CD14-positive monocyte (primary cell): ENCODE measurements at regions of chr1 and their contacts with region 1.

Region 1: DNA sequence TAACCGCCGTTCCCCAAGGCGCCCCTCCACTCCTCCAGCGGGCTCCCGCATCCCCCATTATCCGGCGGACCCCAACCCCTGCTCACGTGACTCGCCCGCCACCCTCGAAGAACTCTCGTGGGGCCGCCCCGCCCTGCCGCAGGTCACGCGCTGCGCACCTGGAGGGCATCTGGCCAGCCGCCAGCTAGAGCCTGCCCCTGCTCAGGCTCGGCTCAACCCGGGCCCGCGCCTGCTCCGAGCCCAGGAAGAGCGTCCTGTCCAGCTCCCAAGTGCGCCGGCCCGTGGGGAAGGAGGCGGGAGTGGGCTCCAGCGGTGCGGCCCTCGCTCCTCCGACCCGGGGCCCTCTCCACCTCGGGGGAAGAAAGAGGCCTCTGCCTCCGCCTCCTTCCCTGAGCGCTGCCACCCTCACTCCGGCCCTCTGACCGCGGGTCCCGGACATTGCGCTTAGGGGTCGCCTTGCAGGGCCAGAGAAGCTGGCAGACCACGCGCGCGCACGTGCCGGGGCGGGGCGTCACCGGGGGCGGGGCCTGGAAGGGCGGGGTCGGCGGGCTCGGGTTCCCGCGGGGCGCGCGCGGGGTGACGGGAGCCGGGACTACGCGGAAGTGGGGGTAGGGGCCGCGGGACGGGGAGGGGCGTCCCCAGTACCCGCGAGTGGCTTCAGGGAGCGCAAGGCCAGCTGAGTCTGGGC is 28.4 kb downstream of the HMGN2 start:
- DNase-seq: peak; percentile 73 to 77 (median 75)
- H3K4me3 ChIP-seq: peak overlapping the region; percentile 73 to 95 (median 86)
- H3K4me3 Mint-ChIP-seq: peak overlapping the region; percentile 85 to 91
- H3K27ac ChIP-seq: peak overlapping the region; percentile 69 to 91
- H3K27ac Mint-ChIP-seq: peak overlapping the region; percentile 87 to 97 (median 93)
- H3K4me1 ChIP-seq: peaks cover 17 to 22% of the 10 kb centered on the region in 2 donors
- H3K4me1 Mint-ChIP-seq: peaks cover 20% of the 10 kb centered on the region
- H3K27me3 ChIP-seq: no peaks in the 10 kb centered on the region
- H3K27me3 Mint-ChIP-seq: peaks cover 0 to 9% (median 0%) of the 10 kb centered on the region in 3 donors
- CTCF ChIP-seq: peak; percentile 63

Region 2: DNA sequence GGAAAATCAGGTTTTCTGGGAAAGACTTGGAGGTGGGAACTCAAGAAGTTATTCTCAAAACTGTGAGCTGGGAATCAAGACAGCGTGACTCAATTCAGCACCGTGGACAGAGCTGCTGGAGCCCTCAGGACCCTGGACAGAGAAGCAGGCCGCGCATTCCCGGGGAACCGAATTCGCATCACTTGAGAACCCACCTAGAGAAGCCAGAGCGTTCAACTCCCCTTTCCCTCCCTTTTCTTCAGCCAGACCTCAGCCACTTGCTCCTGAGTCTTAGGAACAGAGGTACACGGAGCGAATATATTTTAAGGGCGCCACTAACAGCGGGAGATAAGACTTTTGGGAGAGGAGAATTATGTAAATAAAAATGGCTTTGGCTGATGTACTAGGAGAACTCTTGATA is 92.0 kb before region 1 on chr1:
- intact Hi-C with region 1: no loop called
- DNase-seq: peak; percentile 45 to 48 (median 46)
- H3K4me3 ChIP-seq: no peak overlapping the region
- H3K4me3 Mint-ChIP-seq: peak overlapping the region in 1 of 2 donors; percentile 82
- H3K27ac ChIP-seq: no peak overlapping the region
- H3K27ac Mint-ChIP-seq: peak overlapping the region in 1 of 7 donors; percentile 46
- H3K4me1 ChIP-seq: peaks cover 8 to 12% of the 10 kb centered on the region in 2 donors
- H3K4me1 Mint-ChIP-seq: peaks cover 18% of the 10 kb centered on the region
- H3K27me3 ChIP-seq: peaks cover 44 to 60% of the 10 kb centered on the region in 2 donors
- H3K27me3 Mint-ChIP-seq: peaks cover 59 to 73% (median 68%) of the 10 kb centered on the region in 3 donors
- CTCF ChIP-seq: no peak

Region 3: GRCh38 chr1:26472901-26473845 is 27.5 kb before region 1 on chr1:
- intact Hi-C with region 1: loop called in 1 of 2 experiments (anchors 2 kb)
- DNase-seq: peak; percentile 93 to 95 (median 93)
- H3K4me3 ChIP-seq: peak overlapping the region; percentile 51 to 92 (median 81)
- H3K4me3 Mint-ChIP-seq: peak overlapping the region; percentile 93 to 96
- H3K27ac ChIP-seq: peak overlapping the region; percentile 86 to 90
- H3K27ac Mint-ChIP-seq: peak overlapping the region; percentile 78 to 93 (median 87)
- H3K4me1 ChIP-seq: peaks cover 37 to 47% of the 10 kb centered on the region in 2 donors
- H3K4me1 Mint-ChIP-seq: peaks cover 52% of the 10 kb centered on the region
- H3K27me3 ChIP-seq: no peaks in the 10 kb centered on the region
- H3K27me3 Mint-ChIP-seq: peaks cover 0 to 3% (median 0%) of the 10 kb centered on the region in 3 donors
- CTCF ChIP-seq: no peak

Region 4: GRCh38 chr1:26553942-26554682 is 53.5 kb after region 1 on chr1:
- intact Hi-C with region 1: loop called in 1 of 2 experiments (anchors 5 kb)
- DNase-seq: peak; percentile 61 to 69 (median 63)
- H3K4me3 ChIP-seq: peak overlapping the region in 1 of 3 experiments; percentile 0
- H3K4me3 Mint-ChIP-seq: no peak overlapping the region
- H3K27ac ChIP-seq: peak overlapping the region; percentile 54 to 85
- H3K27ac Mint-ChIP-seq: peak overlapping the region; percentile 63 to 93 (median 86)
- H3K4me1 ChIP-seq: peaks cover 22 to 31% of the 10 kb centered on the region in 2 donors
- H3K4me1 Mint-ChIP-seq: peaks cover 28% of the 10 kb centered on the region
- H3K27me3 ChIP-seq: no peaks in the 10 kb centered on the region
- H3K27me3 Mint-ChIP-seq: no peaks in the 10 kb centered on the region
- CTCF ChIP-seq: no peak

Region 5: DNA sequence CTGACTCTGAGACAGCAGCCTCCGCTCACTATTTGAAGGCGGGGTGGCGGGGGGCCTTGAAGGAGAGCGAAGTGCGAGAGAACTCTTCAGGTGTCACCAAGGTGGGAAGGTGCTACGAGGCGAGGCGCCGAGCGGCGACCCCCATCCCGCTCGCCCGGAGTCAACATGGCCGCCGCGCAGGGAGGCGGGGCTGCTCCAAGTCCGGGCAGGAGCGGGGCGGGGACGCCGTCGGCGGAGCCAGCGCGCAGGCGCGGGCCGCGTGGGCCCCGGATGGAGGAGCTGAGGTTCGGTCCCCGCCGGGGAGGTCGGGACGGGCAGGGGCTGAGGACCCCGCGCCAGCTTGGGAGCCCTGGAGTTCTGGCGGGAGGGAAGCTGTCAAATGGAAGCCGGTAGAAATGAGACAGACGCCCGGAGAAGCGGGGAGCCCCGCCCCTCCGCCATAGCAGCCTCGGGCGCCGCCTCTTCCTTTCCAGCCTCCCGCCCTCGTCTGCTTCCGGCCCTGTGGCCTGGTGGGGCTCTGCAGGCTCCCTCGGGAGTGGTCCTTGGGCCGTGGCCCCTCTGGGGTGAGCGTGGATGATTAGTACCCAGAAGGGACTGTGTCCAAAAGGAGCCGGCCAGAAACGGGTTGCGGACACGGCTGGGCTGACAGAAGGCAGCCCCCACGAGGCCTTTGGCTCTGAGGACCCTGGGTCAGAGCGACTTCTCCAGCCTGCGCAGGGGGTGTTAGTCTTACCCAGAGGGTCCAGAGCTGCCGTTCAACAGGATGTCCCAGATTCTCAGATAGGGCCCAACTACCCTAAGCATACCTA is 287.3 kb after region 1 on chr1 and contains the start of gene PIGV:
- intact Hi-C with region 1: loop called in 1 of 2 experiments (anchors 2 kb)
- DNase-seq: peak; percentile 66 to 80 (median 75)
- H3K4me3 ChIP-seq: peak within 1 kb of the TSS; percentile 71 to 97 (median 90)
- H3K4me3 Mint-ChIP-seq: peak within 1 kb of the TSS; percentile 97 to 98
- H3K27ac ChIP-seq: peak within 1 kb of the TSS; percentile 91 to 97
- H3K27ac Mint-ChIP-seq: peak within 1 kb of the TSS; percentile 95 to 99 (median 99)
- H3K4me1 ChIP-seq: peaks cover 51 to 60% of the 10 kb centered on the region in 2 donors
- H3K4me1 Mint-ChIP-seq: peaks cover 61% of the 10 kb centered on the region
- H3K27me3 ChIP-seq: no peaks in the 10 kb centered on the region
- H3K27me3 Mint-ChIP-seq: peaks cover 0 to 2% (median 0%) of the 10 kb centered on the region in 3 donors
- CTCF ChIP-seq: no peak
- polyA plus RNA-seq, gene PIGV: 5.7 to 9.5 (median 8.3) TPM

Region 6: GRCh38 chr1:26874896-26875295 is 374.3 kb after region 1 on chr1:
- intact Hi-C with region 1: loop called in 1 of 2 experiments (anchors 10 kb)
- DNase-seq: no peak
- H3K4me3 ChIP-seq: no peak overlapping the region
- H3K4me3 Mint-ChIP-seq: no peak overlapping the region
- H3K27ac ChIP-seq: no peak overlapping the region
- H3K27ac Mint-ChIP-seq: no peak overlapping the region
- H3K4me1 ChIP-seq: no peaks in the 10 kb centered on the region
- H3K4me1 Mint-ChIP-seq: no peaks in the 10 kb centered on the region
- H3K27me3 ChIP-seq: no peaks in the 10 kb centered on the region
- H3K27me3 Mint-ChIP-seq: peaks cover 0 to 2% (median 0%) of the 10 kb centered on the region in 3 donors
- CTCF ChIP-seq: no peak